Aorta (tissue), 5 donors: ENCODE measurements at regions of chr17 and their contacts with region 1.

Region 1: DNA sequence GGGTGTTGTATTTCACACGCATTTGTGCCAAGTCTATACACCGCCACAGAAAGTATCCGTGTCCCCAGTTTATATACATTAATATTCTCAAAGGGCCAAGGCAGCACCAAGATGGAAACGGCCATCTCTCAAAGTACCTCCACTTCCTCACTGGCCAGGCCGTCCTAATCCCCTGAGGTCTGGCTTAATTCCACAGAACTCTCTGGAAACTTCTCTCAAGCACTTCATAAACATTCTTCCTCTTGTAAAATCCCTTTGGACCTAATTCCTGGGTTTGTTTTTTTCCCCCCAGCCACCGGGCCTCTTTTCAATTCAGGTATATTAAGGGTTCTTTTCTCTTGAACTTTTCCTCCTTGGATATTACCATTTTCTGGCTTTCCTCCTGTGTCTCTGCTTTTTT is 5.1 kb upstream of the ERN1 start:
- DNase-seq: no peak
- ATAC-seq: no peak
- H3K4me3 ChIP-seq: no peak overlapping the region
- H3K27ac ChIP-seq: no peak overlapping the region
- H3K4me1 ChIP-seq: no peaks in the 10 kb centered on the region
- H3K27me3 ChIP-seq: no peaks in the 10 kb centered on the region

Region 2: DNA sequence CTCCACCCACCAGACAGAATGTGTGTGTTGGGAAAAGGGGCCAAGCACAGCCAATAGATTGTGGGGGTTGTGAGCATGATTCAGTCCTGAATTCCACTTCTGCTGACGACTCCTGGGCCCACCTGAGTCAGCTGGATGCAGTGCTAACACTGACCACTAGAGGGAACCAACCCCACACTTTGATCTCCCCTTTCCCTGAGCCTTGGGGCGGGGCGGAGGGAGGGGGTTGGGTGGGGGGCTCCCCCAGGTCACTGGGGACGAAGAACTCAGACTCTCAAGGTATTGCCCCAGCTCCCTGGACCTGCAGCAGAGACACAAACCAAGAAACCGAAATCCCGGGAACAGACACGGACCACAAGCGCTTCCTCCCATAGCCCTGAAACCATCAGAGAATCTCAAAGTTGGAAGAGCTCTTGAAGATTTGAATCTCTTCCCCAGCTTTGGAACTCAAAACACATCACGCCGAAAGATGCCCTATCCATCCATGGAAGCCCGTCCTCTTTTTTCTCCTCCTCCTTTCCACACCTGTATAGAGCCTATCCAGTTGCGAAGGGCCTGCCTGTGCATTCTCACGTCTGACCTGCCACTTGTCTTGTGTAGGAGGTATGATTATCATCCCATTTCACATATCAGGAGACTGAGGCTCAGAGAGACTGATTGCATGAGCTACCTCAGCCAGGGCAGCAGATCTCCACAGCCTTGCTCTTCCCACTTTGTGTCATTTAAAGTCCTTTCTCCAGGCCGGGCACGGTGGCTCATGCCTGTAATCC is 223.2 kb before region 1 on chr17:
- intact Hi-C with region 1: loop called (anchors 5 kb)
- DNase-seq: peak in 1 of 2 donors; percentile 30
- ATAC-seq: peak; percentile 78
- H3K4me3 ChIP-seq: no peak overlapping the region
- H3K27ac ChIP-seq: no peak overlapping the region
- H3K4me1 ChIP-seq: no peaks in the 10 kb centered on the region
- H3K27me3 ChIP-seq: no peaks in the 10 kb centered on the region